ENCODE measurements at regions of chr12 and their contacts with region 1.

Region 1: GRCh38 chr12:7959701-7960121 is 23.7 kb upstream of the SLC2A3 start:
- DNase-seq: peak; percentile 90
- H3K4me3 Mint-ChIP-seq: peak overlapping the region; percentile 94
- H3K27ac Mint-ChIP-seq: peak overlapping the region; percentile 95
- H3K4me1 Mint-ChIP-seq: peaks cover 36% of the 10 kb centered on the region
- H3K27me3 Mint-ChIP-seq: no peaks in the 10 kb centered on the region

Region 2: GRCh38 chr12:7970475-7971252 is 11.0 kb after region 1 on chr12:
- intact Hi-C with region 1: loop called (anchors 1 kb)
- DNase-seq: peak; percentile 96
- H3K4me3 Mint-ChIP-seq: peak overlapping the region; percentile 88
- H3K27ac Mint-ChIP-seq: peak overlapping the region; percentile 100
- H3K4me1 Mint-ChIP-seq: peaks cover 33% of the 10 kb centered on the region
- H3K27me3 Mint-ChIP-seq: no peaks in the 10 kb centered on the region

Region 3: DNA sequence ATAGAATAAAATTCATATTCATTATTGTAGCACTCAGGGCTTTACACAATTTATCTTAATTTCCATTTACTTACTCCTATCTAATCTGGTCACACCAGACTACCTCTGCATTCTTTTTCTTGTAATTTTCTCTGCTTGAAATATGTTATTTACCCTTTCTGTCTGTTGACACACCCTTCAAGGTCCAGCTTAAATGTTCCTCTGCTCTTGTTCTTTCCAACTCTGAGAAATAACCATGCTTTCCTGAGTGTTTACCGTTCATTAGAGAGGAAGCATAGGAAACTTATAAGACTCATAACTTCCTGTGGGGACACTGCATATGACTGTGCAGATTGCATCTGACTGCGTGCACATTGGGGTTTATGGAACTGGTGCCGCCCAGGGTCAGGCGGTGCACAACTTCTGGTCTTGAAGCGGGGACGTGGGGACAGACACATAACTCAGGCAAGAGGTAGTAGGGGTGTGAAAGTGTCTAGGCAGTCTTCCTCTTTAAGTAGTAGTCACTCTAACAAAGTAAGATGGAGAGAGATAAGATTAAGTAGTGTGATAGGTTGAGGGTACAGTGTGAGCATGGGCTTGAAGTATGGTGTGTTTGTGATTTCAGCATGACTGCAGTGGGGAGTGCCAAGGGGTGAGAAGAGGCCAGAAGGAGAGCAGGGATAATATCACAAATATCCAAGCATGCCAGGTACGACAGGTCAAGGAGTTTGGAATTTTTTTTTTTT is 30.3 kb after region 1 on chr12:
- intact Hi-C with region 1: loop called (anchors 1 kb)
- DNase-seq: peak; percentile 93
- H3K4me3 Mint-ChIP-seq: peak overlapping the region; percentile 75
- H3K27ac Mint-ChIP-seq: peak overlapping the region; percentile 88
- H3K4me1 Mint-ChIP-seq: peaks cover 37% of the 10 kb centered on the region
- H3K27me3 Mint-ChIP-seq: no peaks in the 10 kb centered on the region

Region 4: GRCh38 chr12:7995266-7995963 is 35.7 kb after region 1 on chr12:
- intact Hi-C with region 1: loop called (anchors 1 kb)
- DNase-seq: peak; percentile 94
- H3K4me3 Mint-ChIP-seq: no peak overlapping the region
- H3K27ac Mint-ChIP-seq: no peak overlapping the region
- H3K4me1 Mint-ChIP-seq: peaks cover 22% of the 10 kb centered on the region
- H3K27me3 Mint-ChIP-seq: no peaks in the 10 kb centered on the region

Region 5: DNA sequence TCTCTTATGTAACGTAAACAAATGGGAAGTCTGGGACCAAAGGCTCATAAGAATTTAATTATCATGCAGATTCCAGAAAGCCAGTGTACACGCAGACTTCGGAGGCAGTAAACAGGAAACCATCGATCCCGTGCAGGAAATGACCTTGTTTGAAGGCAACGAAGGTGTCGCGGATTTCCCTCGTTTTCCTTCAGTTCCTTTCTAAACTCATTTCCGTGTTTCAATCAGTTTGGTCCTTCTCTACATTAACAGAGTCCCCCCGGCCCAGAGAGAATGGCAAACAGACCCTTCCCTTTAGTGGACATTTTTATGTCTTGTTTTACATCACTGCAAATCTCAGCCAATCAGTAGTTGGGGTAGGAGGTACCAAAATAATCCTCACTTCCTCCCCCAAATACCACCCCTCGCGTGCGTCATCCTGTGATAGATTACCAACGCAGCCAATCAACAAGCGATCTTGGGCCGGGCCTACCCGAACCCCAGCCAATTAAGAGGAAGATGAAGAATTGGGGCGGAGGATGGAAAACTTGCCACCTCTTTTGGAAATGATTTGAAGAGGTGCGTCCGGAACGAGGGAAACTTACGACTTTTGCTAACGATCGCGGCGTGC is 66.7 kb after region 1 on chr12:
- intact Hi-C with region 1: loop called (anchors 2 kb)
- DNase-seq: peak; percentile 99
- H3K4me3 Mint-ChIP-seq: peak overlapping the region; percentile 91
- H3K27ac Mint-ChIP-seq: peak overlapping the region; percentile 100
- H3K4me1 Mint-ChIP-seq: peaks cover 18% of the 10 kb centered on the region
- H3K27me3 Mint-ChIP-seq: no peaks in the 10 kb centered on the region